ENCODE measurements at regions of chr1 and their contacts with region 1.

Region 1: DNA sequence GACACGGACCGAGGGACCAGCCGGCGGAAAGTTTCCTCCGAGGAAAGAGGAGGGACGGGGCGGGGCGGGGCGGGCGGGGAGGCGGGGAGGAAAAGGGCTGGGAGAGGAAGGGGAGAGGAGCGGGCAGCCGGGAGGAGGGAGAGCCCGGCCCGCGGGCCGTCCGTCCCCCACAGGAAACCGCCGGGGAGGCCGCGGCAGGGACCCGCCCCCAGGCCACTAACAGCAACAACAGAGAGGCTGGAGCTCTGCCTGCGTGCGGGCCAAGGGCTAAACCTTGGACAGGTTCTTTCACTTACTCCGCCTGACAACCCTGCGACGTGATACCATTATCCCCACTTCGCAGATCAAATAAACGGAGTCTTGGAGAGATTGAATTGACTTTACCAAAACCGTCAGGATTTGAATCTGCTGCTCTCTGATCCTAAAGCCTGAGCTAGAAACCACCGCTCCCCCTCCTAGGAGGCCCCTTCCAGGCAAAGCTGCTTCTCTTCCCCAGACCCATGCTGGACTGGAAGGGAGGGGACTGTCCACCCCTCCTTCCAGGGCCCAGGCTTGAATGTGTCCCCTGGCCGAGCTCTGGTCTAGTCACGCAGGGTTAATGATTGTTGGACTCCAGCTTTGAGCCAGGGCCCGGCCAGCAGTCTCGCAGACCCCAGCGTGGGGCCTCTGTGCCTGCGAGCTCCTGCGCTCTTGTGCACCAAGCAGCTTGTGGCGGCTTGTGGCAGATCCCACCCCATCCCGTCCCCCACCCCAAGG is at the start of gene EVA1B:
- DNase-seq: peak; percentile 72
- ATAC-seq: peak; percentile 64
- H3K4me3 Mint-ChIP-seq: peak within 1 kb of the TSS; percentile 77
- H3K27ac Mint-ChIP-seq: peak within 1 kb of the TSS; percentile 74
- H3K4me1 Mint-ChIP-seq: peaks cover 47% of the 10 kb centered on the region
- H3K27me3 Mint-ChIP-seq: peaks cover 16% of the 10 kb centered on the region
- total RNA-seq, gene EVA1B: 12.3 to 13.3 TPM

Region 2: GRCh38 chr1:36306902-36307456 is 16.8 kb before region 1 on chr1:
- CTCF ChIA-PET with region 1: interaction called, 8 read pairs
- POLR2A ChIA-PET with region 1: interaction called, 11 read pairs
- DNase-seq: peak; percentile 95
- ATAC-seq: peak; percentile 99
- H3K4me3 Mint-ChIP-seq: peak overlapping the region; percentile 98
- H3K27ac Mint-ChIP-seq: peak overlapping the region; percentile 91
- H3K4me1 Mint-ChIP-seq: peaks cover 29% of the 10 kb centered on the region
- H3K27me3 Mint-ChIP-seq: no peaks in the 10 kb centered on the region

Measured in activated CD8-positive, alpha-beta T cell treated with anti-CD3 and anti-CD28 coated beads, Interleukin-2, amount 10 ng/mL, durations not matched to agents 7 days and 5 days (primary cell).